IMR-90 (cell line): ENCODE measurements at regions of chr9 and their contacts with region 1.

Region 1: GRCh38 chr9:82961504-82962125 is 101.3 kb downstream of the RASEF start:
- DNase-seq: peak; percentile 70
- ATAC-seq: peak; percentile 96
- H3K4me3 ChIP-seq: no peak overlapping the region
- H3K27ac ChIP-seq: no peak overlapping the region
- H3K4me1 ChIP-seq: no peaks in the 10 kb centered on the region
- H3K27me3 ChIP-seq: peaks cover 4% of the 10 kb centered on the region; the same call in 1 of the 2 replicates
- CTCF ChIP-seq: peak; percentile 89
- POLR2A ChIP-seq: no peak
- RAD21 ChIP-seq: peak; percentile 88

Region 2: GRCh38 chr9:81521892-81522291 is 1439.7 kb before region 1 on chr9:
- CTCF ChIA-PET with region 1: no interaction called
- POLR2A ChIA-PET with region 1: no interaction called
- dilution Hi-C with region 1: no loop called
- in situ Hi-C with region 1: loop called (anchors 25 kb)
- intact Hi-C with region 1: no loop called
- DNase-seq: no peak
- ATAC-seq: no peak
- H3K4me3 ChIP-seq: no peak overlapping the region
- H3K27ac ChIP-seq: no peak overlapping the region
- H3K4me1 ChIP-seq: peaks cover 2% of the 10 kb centered on the region; the same call in 1 of the 2 replicates
- H3K27me3 ChIP-seq: no peaks in the 10 kb centered on the region
- CTCF ChIP-seq: no peak
- POLR2A ChIP-seq: no peak
- RAD21 ChIP-seq: no peak

Region 3: DNA sequence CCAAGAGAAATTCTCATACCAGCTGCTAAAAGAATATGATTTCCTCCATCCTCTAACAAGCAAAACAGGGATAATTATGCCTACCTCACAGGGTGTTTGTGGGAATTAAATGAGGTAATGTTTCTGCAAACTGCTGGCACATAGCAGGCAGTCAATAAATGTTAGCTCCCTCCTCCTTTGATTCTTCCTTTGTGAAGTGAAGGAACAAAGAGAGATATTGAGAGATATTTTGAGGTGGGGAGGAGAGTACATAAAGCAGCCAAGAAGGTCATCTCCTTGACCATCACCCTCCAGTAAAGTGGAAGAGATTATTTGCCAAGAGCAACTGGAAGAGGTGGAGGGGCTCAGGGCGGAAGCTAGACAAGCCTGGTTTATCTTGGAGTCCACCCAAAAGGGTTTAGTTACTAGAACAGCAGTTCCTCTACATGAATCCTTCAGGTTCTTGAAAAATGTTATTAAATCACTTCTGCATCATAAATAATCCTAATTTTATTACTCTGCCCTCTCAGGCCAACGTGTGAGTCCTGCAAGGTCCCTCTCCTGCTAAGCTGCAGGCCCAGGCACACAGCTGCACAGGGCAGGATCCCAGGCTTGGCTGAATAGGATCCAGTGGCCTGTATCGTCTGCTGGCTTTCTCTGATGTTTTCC is 1237.2 kb before region 1 on chr9:
- CTCF ChIA-PET with region 1: no interaction called
- POLR2A ChIA-PET with region 1: no interaction called
- dilution Hi-C with region 1: no loop called
- in situ Hi-C with region 1: loop called (anchors 25 kb)
- intact Hi-C with region 1: no loop called
- DNase-seq: peak; percentile 5
- ATAC-seq: no peak
- H3K4me3 ChIP-seq: no peak overlapping the region
- H3K27ac ChIP-seq: no peak overlapping the region
- H3K4me1 ChIP-seq: no peaks in the 10 kb centered on the region
- H3K27me3 ChIP-seq: no peaks in the 10 kb centered on the region
- CTCF ChIP-seq: no peak
- POLR2A ChIP-seq: no peak
- RAD21 ChIP-seq: no peak

Region 4: GRCh38 chr9:82532504-82533180 is 429.0 kb before region 1 on chr9:
- CTCF ChIA-PET with region 1: interaction called, 4 read pairs
- POLR2A ChIA-PET with region 1: no interaction called
- dilution Hi-C with region 1: no loop called
- in situ Hi-C with region 1: no loop called
- intact Hi-C with region 1: loop called (anchors 5 kb)
- DNase-seq: peak; percentile 19
- ATAC-seq: peak; percentile 67
- H3K4me3 ChIP-seq: no peak overlapping the region
- H3K27ac ChIP-seq: no peak overlapping the region
- H3K4me1 ChIP-seq: no peaks in the 10 kb centered on the region
- H3K27me3 ChIP-seq: no peaks in the 10 kb centered on the region
- CTCF ChIP-seq: peak; percentile 35
- POLR2A ChIP-seq: no peak
- RAD21 ChIP-seq: peak; percentile 41; the same call in 1 of the 2 replicates

Region 5: DNA sequence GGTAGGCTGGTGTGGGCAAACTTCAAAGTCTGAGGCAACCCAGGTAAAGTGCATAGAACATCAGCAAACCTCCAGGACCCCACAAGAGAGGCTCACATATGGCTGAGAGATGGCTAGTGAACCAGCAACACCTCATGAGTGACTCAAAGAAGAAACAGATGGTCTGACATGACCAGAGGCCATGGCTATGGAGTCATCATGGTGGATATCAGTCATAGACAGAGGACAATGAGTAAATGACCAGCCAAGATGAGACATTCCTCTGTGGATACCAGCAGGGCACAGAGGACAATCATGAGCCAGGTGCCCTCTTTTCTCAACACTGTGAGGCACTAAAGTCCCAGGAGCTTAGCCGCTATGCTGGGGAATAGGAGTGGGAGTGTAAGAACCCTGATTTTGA is 79.5 kb before region 1 on chr9:
- CTCF ChIA-PET with region 1: no interaction called
- POLR2A ChIA-PET with region 1: no interaction called
- dilution Hi-C with region 1: no loop called
- in situ Hi-C with region 1: no loop called
- intact Hi-C with region 1: no loop called
- DNase-seq: peak; percentile 13
- ATAC-seq: no peak
- H3K4me3 ChIP-seq: no peak overlapping the region
- H3K27ac ChIP-seq: no peak overlapping the region
- H3K4me1 ChIP-seq: no peaks in the 10 kb centered on the region
- H3K27me3 ChIP-seq: no peaks in the 10 kb centered on the region
- CTCF ChIP-seq: no peak
- POLR2A ChIP-seq: no peak
- RAD21 ChIP-seq: no peak